Head of caudate nucleus (tissue), 42 donors: ENCODE measurements at regions of chr21 and their contacts with region 1.

Region 1: DNA sequence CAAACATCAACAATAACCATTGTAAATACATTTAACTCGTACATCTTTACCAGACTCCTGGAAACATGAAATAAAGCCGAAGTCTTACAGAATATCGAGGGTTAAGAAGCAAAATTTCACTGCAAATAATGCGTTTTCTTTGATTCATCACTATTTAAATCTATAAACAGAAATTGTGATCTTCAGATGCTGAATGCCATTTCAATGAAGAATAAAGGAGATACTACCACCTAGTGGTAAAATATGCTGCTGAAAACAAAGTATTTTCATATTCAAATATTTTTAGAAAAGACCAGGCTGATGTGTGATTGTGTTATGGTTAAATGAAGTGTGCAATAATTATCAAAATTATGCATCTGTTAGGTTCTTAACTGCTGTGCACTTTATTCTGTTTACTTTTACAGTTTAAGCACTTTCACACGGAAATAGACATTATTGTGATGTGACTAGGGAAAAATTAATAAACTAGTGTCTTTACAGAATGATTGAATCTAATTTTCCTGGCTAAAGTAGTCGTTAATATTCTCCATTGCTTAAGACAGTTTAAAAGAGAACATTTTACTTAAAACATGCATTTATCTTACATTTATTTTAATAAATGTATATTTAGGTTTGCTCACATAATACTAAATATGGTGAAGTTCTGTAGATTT is 1093.1 kb downstream of the MRPL39 start:
- DNase-seq: no peak

Region 2: GRCh38 chr21:23853796-23854379 is 660.3 kb before region 1 on chr21:
- intact Hi-C with region 1: loop called (anchors 10 kb)
- DNase-seq: peak in 16 of 42 donors; percentile 13 to 72 (median 36)

Region 3: GRCh38 chr21:24118738-24119459 is 395.3 kb before region 1 on chr21:
- intact Hi-C with region 1: loop called (anchors 10 kb)
- DNase-seq: no peak

Region 4: GRCh38 chr21:24450119-24450518 is 64.1 kb before region 1 on chr21:
- intact Hi-C with region 1: no loop called
- DNase-seq: no peak

Region 5: GRCh38 chr21:24561291-24561690 is 47.1 kb after region 1 on chr21:
- intact Hi-C with region 1: no loop called
- DNase-seq: peak in 11 of 42 donors; percentile 2 to 47 (median 25)

Region 6: DNA sequence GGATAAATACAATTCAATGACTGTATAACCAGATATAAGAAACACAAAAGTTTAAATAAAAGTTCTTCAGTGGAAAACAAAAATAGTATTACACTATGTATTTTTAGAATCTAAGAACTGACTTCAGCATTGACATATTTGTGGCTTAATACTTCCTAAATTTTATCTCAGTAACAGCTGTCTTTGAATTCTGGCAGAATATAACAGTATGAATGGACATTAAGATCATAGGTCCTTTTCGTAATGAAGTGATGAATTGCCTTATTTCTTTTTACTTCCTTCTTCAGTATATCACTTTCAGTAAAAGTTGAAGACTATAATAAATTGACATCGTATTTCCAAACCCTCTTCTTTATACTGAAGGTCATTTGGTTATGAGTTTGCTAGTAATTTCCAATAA is 63.1 kb after region 1 on chr21:
- intact Hi-C with region 1: no loop called
- DNase-seq: no peak